Lower lobe of right lung (tissue), 2 donors: ENCODE measurements at regions of chr6 and their contacts with region 1.

Region 1: GRCh38 chr6:46993846-46994245 is 48.3 kb downstream of the ADGRF1 start:
- DNase-seq: no peak
- ATAC-seq: peak; percentile 73 to 77
- H3K4me3 ChIP-seq: no peak overlapping the region
- H3K27ac ChIP-seq: no peak overlapping the region
- H3K4me1 ChIP-seq: peaks cover 19% of the 10 kb centered on the region
- H3K27me3 ChIP-seq: no peaks in the 10 kb centered on the region
- CTCF ChIP-seq: no peak

Region 2: DNA sequence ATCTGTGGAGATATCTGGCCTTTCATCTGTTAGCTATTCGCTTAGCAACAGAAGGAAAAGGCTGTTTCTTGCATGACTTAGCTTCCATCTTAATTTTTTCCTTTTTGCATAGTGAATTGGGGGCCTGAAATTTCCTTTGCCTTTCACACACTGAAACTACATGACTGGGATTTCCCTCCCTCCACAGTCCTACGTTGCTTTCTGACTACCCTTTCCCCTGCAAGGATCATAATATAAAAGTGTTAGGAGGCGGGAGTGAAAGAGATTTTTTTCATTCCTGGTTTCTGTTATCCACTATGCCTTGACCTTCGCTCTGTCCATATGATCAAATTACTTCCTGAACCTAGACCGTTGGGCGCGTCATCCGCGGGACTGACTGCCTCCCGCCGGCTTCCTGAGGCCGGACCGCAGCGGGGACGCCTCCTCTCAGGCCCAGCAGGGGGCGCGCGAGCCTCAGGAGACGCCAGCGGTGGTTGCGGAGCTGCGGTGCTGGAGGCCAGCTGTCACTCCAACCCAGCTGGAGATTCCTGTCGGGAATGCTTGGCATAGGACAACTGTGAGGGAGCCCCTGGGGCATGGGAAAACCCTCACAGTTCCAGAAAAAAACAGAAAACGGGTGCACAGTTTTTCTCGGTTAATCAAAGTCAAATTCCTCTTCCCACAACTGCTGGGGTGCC is 145.0 kb before region 1 on chr6:
- intact Hi-C with region 1: loop called (anchors 5 kb)
- DNase-seq: peak; percentile 93
- ATAC-seq: peak; percentile 96 to 97
- H3K4me3 ChIP-seq: peak overlapping the region; percentile 21
- H3K27ac ChIP-seq: no peak overlapping the region
- H3K4me1 ChIP-seq: peaks cover 19% of the 10 kb centered on the region
- H3K27me3 ChIP-seq: no peaks in the 10 kb centered on the region
- CTCF ChIP-seq: peak; percentile 97

Region 3: DNA sequence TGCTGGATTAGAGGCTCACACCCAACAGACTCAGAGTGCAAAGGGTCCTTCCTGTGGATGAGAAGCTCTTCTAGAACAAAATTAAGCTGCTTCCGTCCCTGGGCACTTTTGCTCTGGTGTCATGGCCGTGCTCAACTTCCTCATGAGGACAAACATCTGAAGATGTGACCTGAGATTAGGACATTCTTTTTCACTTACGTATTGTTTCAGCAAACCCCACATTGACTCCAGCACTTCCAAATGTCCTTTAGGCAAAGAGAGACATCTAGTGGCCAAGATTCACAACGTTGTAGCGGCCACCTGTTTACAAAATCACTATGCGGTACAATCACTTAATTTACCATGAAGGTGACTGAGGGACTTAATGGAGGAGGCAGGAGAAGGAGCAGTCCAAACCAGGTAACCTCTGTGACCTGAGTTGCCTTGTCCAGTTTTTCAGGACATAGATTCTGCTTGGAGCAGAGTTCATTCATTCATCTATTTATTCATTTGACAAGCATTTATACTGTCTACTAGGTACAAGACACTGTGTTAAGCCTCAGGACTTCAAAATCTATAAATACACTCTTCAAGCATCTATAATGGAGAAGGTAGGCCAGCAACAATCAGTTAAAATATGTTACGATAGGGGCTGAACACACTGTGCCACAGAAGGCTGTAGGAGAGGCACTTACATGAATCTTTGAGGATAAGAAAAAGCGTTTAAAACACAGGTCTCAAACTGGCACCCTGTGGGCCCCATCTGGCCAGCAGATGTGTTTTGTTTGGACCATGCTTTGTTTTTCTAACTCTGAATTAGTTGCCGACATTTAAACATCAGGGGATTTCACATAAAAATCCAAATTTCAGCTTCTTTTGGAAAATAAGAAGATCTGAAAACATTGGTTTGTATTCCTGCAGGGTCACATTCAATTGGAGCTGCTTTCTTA is 53.9 kb after region 1 on chr6:
- intact Hi-C with region 1: loop called (anchors 10 kb)
- DNase-seq: no peak
- ATAC-seq: peak; percentile 93 to 94
- H3K4me3 ChIP-seq: no peak overlapping the region
- H3K27ac ChIP-seq: peak overlapping the region; percentile 3
- H3K4me1 ChIP-seq: peaks cover 19% of the 10 kb centered on the region
- H3K27me3 ChIP-seq: no peaks in the 10 kb centered on the region
- CTCF ChIP-seq: peak; percentile 80